ENCODE measurements at regions of chr1 and their contacts with region 1.

Region 1: GRCh38 chr1:153670859-153671627 is at the start of gene ILF2:
- DNase-seq: peak; percentile 99
- H3K4me3 ChIP-seq: peak within 1 kb of the TSS; percentile 70
- H3K27ac ChIP-seq: peak within 1 kb of the TSS; percentile 85
- H3K4me1 ChIP-seq: peaks cover 8% of the 10 kb centered on the region
- H3K27me3 ChIP-seq: no peaks in the 10 kb centered on the region
- CTCF ChIP-seq: peak; percentile 41; the same call in 1 of the 2 replicates
- total RNA-seq, gene ILF2: 391 and 420 TPM in 2 replicates

Region 2: GRCh38 chr1:153734396-153735089 is 63.5 kb after region 1 on chr1:
- CTCF ChIA-PET with region 1: no interaction called
- POLR2A ChIA-PET with region 1: no interaction called
- intact Hi-C with region 1: no loop called
- DNase-seq: no peak
- H3K4me3 ChIP-seq: no peak overlapping the region
- H3K27ac ChIP-seq: no peak overlapping the region
- H3K4me1 ChIP-seq: peaks cover under 1% of the 10 kb centered on the region
- H3K27me3 ChIP-seq: no peaks in the 10 kb centered on the region
- CTCF ChIP-seq: no peak

Region 3: DNA sequence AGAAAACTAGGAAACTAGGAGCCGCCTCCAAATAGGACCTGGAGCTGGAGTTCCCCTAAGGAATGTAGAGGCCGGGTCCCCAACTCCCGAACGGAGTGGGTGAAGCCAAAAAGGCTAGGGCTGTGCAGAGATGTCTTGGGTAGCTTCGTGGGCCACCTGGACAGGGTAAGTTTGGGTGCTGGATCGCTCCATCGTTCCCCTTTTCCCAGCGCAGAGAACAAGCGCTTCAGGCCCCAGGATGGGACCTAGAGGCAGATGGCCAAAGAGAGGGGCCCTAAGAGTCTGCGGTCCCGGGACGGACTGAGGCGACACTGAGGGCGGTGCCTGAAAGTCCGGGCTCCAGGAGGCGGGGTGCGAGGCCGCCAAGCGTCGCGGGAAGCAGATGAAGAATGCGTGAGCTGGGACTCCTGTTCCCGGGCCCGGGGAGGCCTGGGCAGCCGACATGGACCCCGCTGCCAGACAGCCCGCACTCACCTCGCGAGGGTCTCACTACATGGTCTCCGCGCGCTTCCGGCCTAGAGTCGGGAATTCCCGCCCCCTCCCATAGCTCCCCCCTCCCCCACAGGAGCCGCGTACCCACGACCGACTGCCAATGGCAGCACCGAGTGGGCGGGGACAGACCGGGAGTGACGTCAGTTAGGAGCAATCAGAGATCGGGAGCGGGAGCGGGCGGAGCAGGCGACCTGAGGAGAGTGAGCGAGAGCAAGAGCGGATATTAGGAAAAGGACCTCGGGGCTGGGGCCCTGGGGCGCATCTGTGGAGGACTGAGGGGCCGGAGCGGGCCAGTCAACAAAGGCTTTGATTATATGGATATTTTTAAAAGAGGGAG is 292.2 kb after region 1 on chr1 and contains the start of gene SLC39A1:
- CTCF ChIA-PET with region 1: no interaction called
- POLR2A ChIA-PET with region 1: no interaction called
- intact Hi-C with region 1: loop called (anchors 5 kb)
- DNase-seq: peak; percentile 99
- H3K4me3 ChIP-seq: peak within 1 kb of the TSS; percentile 77
- H3K27ac ChIP-seq: peak within 1 kb of the TSS; percentile 74
- H3K4me1 ChIP-seq: peaks cover 20% of the 10 kb centered on the region
- H3K27me3 ChIP-seq: no peaks in the 10 kb centered on the region
- CTCF ChIP-seq: no peak
- total RNA-seq, gene SLC39A1: 90.7 and 97.3 TPM in 2 replicates